AG04449 (cell line): ENCODE measurements at regions of chr9 and their contacts with region 1.

Region 1: GRCh38 chr9:126490871-126491567 is 122.7 kb upstream of the LMX1B start:
- DNase-seq: no peak
- H3K4me3 ChIP-seq: no peak overlapping the region
- CTCF ChIP-seq: peak; percentile 82

Region 2: DNA sequence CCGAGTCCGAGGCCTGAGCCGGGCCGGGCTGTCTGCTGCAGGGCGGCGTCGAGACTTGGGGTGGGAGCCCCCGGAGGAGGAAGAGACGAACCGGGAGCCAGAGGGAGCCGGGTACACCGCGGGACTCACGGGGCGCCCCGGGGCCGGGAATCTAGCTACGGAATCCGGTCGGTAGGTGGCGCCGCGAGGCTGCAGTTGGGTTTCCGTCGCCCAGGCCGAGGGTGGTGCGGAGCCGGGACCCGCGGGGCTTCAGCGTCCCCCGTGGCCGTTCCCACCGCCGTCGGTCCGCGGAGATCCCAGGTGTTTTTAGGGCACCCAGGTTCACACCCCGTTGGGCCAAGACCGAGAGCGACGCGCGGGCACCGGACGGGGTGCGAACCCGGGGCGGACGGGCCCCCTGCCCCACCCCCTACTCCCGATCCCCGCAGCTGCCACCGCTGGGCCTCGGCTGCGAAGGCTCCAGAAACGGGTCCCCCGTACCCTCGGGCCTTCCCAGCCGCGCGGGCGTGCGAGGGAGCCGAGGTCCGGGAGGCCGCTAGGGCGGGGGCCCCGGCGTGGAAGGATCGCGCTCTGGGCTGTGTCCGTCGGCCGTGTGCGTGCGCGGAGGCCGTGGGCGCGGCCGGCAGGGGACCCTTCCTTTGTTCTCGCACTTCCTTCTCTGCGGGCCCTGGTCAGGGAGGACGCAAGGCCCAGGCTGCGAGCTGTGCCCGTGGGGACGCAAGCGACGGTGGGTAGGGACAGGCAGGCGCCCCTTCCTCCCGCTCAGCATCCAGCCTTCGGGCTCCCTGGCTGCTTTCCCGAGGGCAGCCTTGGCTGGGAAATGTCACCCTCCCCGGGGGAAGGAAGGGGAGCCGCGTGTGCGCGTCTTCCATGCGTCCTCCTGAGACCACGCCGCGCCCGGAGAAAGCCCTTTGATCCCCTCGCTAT is 1082.8 kb before region 1 on chr9:
- CTCF ChIA-PET with region 1: interaction called, 18 read pairs
- POLR2A ChIA-PET with region 1: no interaction called
- DNase-seq: no peak
- H3K4me3 ChIP-seq: peak overlapping the region; percentile 67
- CTCF ChIP-seq: peak; percentile 93

Region 3: GRCh38 chr9:126301985-126302603 is 188.9 kb before region 1 on chr9:
- CTCF ChIA-PET with region 1: interaction called, 90 read pairs
- POLR2A ChIA-PET with region 1: no interaction called
- DNase-seq: peak; percentile 4
- H3K4me3 ChIP-seq: no peak overlapping the region
- CTCF ChIP-seq: peak; percentile 87

Region 4: DNA sequence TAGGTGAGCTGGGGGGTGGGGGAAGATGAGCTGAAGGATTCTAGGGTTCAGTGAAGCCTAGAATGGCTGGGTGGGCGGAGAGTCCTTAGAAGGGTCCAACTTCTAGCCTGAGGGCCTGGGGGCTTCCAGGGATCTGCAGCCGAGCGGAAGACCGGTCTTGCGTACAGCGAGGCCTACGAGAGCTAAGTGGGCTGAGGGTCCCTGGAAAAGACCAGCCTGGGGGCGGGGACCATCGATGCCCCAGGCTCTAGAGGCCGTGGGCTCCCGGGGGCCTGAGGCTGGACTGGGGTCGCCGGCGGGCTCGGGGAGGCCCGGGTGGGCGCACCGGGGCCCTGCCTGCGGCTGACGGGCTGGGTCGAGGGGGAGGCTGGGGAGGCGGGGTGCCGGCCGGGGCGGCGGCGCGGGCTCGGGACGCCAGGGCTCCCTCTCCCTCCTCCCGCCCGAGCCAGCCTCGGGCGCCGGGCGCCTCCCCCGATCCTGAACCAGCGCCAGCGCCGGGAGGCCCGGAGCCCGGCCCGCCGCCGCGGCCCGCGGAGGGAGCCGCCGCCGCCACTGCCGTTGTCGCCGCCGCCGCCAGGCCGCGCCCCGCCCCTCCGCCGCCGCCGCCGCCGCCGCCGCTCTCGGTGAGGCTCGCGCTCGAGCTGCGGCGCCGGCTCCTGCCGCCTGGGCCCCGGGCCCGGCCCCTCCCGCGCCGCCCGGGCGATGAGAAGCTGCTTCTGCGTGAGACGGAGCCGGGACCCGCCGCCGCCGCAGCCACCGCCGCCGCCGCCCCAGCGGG is 164.6 kb before region 1 on chr9 and contains the start of gene MVB12B:
- CTCF ChIA-PET with region 1: interaction called, 17 read pairs
- POLR2A ChIA-PET with region 1: no interaction called
- DNase-seq: no peak
- H3K4me3 ChIP-seq: peak within 1 kb of the TSS; percentile 69
- CTCF ChIP-seq: no peak

Region 5: GRCh38 chr9:126449725-126450667 is 41.0 kb before region 1 on chr9:
- CTCF ChIA-PET with region 1: interaction called, 11 read pairs
- POLR2A ChIA-PET with region 1: no interaction called
- DNase-seq: no peak
- H3K4me3 ChIP-seq: no peak overlapping the region
- CTCF ChIP-seq: no peak

Region 6: GRCh38 chr9:126558051-126558665 is 67.1 kb after region 1 on chr9:
- CTCF ChIA-PET with region 1: interaction called, 269 read pairs
- POLR2A ChIA-PET with region 1: no interaction called
- DNase-seq: no peak
- H3K4me3 ChIP-seq: no peak overlapping the region
- CTCF ChIP-seq: peak; percentile 92